Calu3 (cell line): ENCODE measurements at regions of chr2 and their contacts with region 1.

Region 1: GRCh38 chr2:219408631-219409030 is 9.5 kb upstream of the DES start:
- DNase-seq: no peak
- H3K4me3 Mint-ChIP-seq: no peak overlapping the region
- H3K27ac Mint-ChIP-seq: no peak overlapping the region
- H3K4me1 Mint-ChIP-seq: peaks cover 8% of the 10 kb centered on the region
- H3K27me3 Mint-ChIP-seq: peaks cover 41% of the 10 kb centered on the region
- CTCF ChIP-seq: no peak

Region 2: GRCh38 chr2:218898109-218898878 is 510.3 kb before region 1 on chr2:
- CTCF ChIA-PET with region 1: no interaction called
- intact Hi-C with region 1: no loop called
- DNase-seq: peak; percentile 82
- H3K4me3 Mint-ChIP-seq: peak overlapping the region; percentile 61
- H3K27ac Mint-ChIP-seq: no peak overlapping the region
- H3K4me1 Mint-ChIP-seq: peaks cover 47% of the 10 kb centered on the region
- H3K27me3 Mint-ChIP-seq: peaks cover 25% of the 10 kb centered on the region
- CTCF ChIP-seq: peak; percentile 99

Region 3: GRCh38 chr2:219388127-219388844 is 20.3 kb before region 1 on chr2:
- CTCF ChIA-PET with region 1: interaction called, 11 read pairs
- intact Hi-C with region 1: no loop called
- DNase-seq: peak; percentile 98
- H3K4me3 Mint-ChIP-seq: peak overlapping the region; percentile 94
- H3K27ac Mint-ChIP-seq: peak overlapping the region; percentile 90
- H3K4me1 Mint-ChIP-seq: no peaks in the 10 kb centered on the region
- H3K27me3 Mint-ChIP-seq: peaks cover 3% of the 10 kb centered on the region
- CTCF ChIP-seq: peak; percentile 40